Naive thymus-derived CD4-positive, alpha-beta T cell (primary cell): ENCODE measurements at regions of chr12 and their contacts with region 1.

Region 1: GRCh38 chr12:49623142-49623904 is at the start of gene PRPF40B:
- DNase-seq: peak; percentile 82 to 92 (median 89)
- ATAC-seq: peak; percentile 89
- H3K4me3 ChIP-seq: peak within 1 kb of the TSS; percentile 42
- H3K4me3 Mint-ChIP-seq: peak within 1 kb of the TSS; percentile 86 to 96 (median 91)
- H3K27ac ChIP-seq: peak within 1 kb of the TSS; percentile 66
- H3K27ac Mint-ChIP-seq: peak within 1 kb of the TSS; percentile 81 to 95 (median 91)
- H3K4me1 ChIP-seq: peaks cover 6 to 22% of the 10 kb centered on the region in 2 donors
- H3K4me1 Mint-ChIP-seq: peaks cover 19 to 29% (median 23%) of the 10 kb centered on the region in 7 donors
- H3K27me3 ChIP-seq: no peaks in the 10 kb centered on the region
- H3K27me3 Mint-ChIP-seq: peaks cover 0 to 32% (median 0%) of the 10 kb centered on the region in 5 donors
- total RNA-seq, gene PRPF40B: 7.8 to 24.1 (median 12.1) TPM

Region 2: GRCh38 chr12:49322708-49323523 is 300.4 kb before region 1 on chr12 and contains the start of gene TROAP:
- CTCF ChIA-PET with region 1: no interaction called
- POLR2A ChIA-PET with region 1: no interaction called
- intact Hi-C with region 1: loop called in 1 of 2 experiments (anchors 1 kb)
- DNase-seq: peak; percentile 89 to 98 (median 96)
- ATAC-seq: peak; percentile 97
- H3K4me3 ChIP-seq: peak within 1 kb of the TSS; percentile 75
- H3K4me3 Mint-ChIP-seq: peak within 1 kb of the TSS; percentile 86 to 98 (median 92)
- H3K27ac ChIP-seq: peak within 1 kb of the TSS; percentile 72
- H3K27ac Mint-ChIP-seq: peak within 1 kb of the TSS; percentile 29 to 95 (median 83)
- H3K4me1 ChIP-seq: peaks cover 5 to 14% of the 10 kb centered on the region in 2 donors
- H3K4me1 Mint-ChIP-seq: peaks cover 16 to 25% (median 19%) of the 10 kb centered on the region in 7 donors
- H3K27me3 ChIP-seq: no peaks in the 10 kb centered on the region
- H3K27me3 Mint-ChIP-seq: peaks cover 0 to 5% (median 0%) of the 10 kb centered on the region in 5 donors
- total RNA-seq, gene TROAP: 0.83 to 58.2 (median 1.3) TPM in 4 of 5 experiments, not detected in the other

Region 3: DNA sequence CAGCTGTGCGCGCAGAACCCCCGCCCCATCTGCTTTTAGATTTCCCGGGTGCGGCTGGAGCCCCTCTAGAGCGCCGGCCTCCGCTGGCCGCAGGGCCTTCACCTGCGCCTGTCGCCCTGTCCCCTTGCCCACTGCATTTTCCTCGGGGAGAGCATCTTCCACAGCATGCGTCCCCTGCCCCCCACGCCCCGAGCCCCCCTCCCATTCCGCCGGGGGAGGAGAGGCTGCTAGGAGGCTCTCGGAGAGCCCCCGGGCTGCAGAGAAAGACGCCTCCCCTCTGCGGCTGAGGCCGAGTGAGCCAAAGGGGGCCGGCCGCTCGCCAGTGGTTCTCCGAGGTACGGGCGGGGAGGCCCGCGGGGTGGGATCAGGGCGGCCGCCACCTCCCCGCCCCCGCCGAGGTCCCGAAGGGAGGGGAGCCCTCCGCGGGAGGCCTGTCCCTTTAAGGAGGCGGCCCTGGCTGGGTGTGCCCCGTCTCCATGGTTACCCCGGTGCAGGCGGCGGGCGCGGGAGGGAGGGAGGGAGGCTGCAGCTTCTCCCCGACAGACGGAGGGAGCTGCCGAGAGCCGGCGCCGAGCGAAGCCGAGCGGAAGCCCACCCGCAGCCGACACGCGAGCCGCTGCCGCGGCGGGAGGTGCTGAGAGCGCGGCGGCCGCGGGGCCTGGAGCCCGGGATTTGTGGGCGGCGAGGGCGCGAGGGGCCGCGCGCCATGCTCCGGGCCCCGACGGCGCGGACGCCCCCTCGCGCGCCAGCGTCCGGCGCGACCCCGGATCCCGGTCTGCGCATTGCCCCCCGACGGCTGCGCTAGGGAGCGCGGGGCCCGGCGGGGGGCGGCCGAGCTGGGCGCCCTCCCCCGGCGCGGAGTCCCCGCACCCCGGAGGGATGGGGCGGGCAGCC is 84.6 kb before region 1 on chr12 and contains the start of gene KCNH3:
- CTCF ChIA-PET with region 1: interaction called, 4 read pairs
- POLR2A ChIA-PET with region 1: interaction called, 5 read pairs
- intact Hi-C with region 1: loop called (anchors 2 to 5 kb)
- DNase-seq: peak; percentile 66 to 95 (median 86)
- ATAC-seq: peak; percentile 94
- H3K4me3 ChIP-seq: peak within 1 kb of the TSS; percentile 69
- H3K4me3 Mint-ChIP-seq: peak within 1 kb of the TSS; percentile 66 to 87 (median 80)
- H3K27ac ChIP-seq: peak within 1 kb of the TSS; percentile 11
- H3K27ac Mint-ChIP-seq: peak within 1 kb of the TSS in 6 of 9 donors; percentile 43 to 81 (median 64)
- H3K4me1 ChIP-seq: peaks cover 14 to 15% of the 10 kb centered on the region in 2 donors
- H3K4me1 Mint-ChIP-seq: peaks cover 13 to 37% (median 27%) of the 10 kb centered on the region in 7 donors
- H3K27me3 ChIP-seq: no peaks in the 10 kb centered on the region
- H3K27me3 Mint-ChIP-seq: peaks cover 0 to 66% (median 6%) of the 10 kb centered on the region in 5 donors
- total RNA-seq, gene KCNH3: 0.99 to 5.3 (median 3.8) TPM

Region 4: DNA sequence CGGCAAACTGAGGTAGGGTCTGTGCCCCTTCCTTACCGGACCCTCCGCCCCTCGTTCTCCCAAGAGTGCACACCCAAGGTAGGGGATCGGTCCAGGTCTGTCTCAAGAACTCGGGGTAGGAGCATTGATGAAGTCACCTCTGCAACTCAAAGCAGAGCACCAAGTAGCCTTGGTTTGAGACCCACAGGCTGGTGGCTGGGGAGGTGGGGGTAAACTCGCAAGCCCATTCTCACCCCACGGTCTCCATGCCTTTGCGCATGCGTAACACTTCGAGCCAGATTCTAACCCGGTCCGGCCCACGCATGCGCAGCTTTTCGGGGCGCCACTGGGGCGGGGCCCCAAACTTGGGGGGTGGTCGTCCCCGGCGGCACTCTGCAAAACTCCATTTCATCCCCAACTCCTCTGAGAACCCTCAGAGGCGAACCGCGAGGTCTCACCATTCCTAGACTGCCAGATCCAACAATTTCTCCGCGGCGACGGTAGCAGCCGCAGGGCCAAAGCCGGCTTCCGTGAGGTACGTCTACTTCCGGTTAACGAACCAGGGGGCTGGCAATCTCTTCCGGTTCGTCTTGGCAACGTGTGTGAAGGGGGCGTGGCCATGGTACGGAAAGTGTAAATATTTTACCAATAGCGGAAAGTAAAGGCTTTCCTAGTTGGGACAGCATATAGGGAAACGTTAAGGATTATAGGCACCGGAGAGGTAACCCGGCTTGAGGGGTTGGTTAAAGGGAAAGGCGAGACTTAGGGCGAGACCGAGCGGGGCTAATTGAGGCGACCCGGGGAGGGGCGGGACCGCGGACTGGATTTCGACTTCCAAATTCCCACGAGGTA is 55.5 kb before region 1 on chr12 and contains the start of gene MCRS1:
- CTCF ChIA-PET with region 1: interaction called, 3 read pairs
- POLR2A ChIA-PET with region 1: interaction called, 6 read pairs
- intact Hi-C with region 1: loop called (anchors 1 to 2 kb)
- DNase-seq: peak; percentile 89 to 94 (median 91)
- ATAC-seq: peak; percentile 92
- H3K4me3 ChIP-seq: peak within 1 kb of the TSS; percentile 81
- H3K4me3 Mint-ChIP-seq: peak within 1 kb of the TSS; percentile 94 to 100 (median 99)
- H3K27ac ChIP-seq: peak within 1 kb of the TSS; percentile 91
- H3K27ac Mint-ChIP-seq: peak within 1 kb of the TSS; percentile 98 to 100 (median 99)
- H3K4me1 ChIP-seq: peaks cover 33 to 42% of the 10 kb centered on the region in 2 donors
- H3K4me1 Mint-ChIP-seq: peaks cover 45 to 76% (median 61%) of the 10 kb centered on the region in 7 donors
- H3K27me3 ChIP-seq: no peaks in the 10 kb centered on the region
- H3K27me3 Mint-ChIP-seq: peaks cover 0 to 3% (median 0%) of the 10 kb centered on the region in 5 donors
- total RNA-seq, gene MCRS1: 70.0 to 85.2 (median 71.4) TPM

Region 5: DNA sequence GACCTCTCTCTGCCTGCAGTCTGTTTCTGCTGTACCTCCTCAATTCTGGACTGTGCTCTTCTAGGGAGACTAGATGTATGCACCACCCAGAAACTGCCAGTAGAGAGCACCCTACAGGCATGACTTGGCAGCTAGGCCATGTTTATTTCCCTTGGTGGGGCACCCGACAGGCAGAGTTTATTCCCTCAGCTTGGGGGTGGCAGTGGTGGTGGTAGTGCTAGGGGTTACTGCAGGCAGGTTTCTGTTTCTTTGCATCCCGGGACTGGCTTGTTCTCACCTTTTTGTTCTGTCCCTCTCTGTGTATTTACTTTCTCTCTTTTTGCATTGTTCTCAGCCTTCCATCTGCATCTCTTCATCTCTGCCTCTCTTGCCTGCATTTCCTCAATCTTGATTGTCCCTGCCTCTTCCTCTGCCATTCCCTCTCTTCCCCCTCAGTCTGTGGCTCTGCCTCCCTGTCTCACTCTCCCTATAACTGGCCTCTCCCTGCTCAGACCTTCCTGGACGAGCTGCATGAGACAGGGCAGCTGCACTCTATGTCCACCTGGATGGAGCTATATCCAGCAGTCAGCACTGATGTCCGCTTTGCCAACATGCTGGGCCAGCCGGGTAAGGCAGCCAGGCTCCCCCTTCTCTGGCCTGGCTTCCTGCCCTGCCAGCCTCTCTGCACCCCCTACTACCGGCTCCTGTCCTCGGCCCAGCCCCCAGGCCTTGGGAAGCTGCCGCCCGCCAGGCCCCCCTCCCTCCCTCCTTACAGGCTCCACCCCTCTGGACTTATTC is 13.8 kb after region 1 on chr12:
- CTCF ChIA-PET with region 1: interaction called, 29 read pairs
- POLR2A ChIA-PET with region 1: interaction called, 9 read pairs
- intact Hi-C with region 1: no loop called
- DNase-seq: peak in 8 of 9 donors; percentile 45 to 71 (median 61)
- ATAC-seq: peak; percentile 95
- H3K4me3 ChIP-seq: no peak overlapping the region
- H3K4me3 Mint-ChIP-seq: peak overlapping the region in 1 of 10 donors; percentile 20
- H3K27ac ChIP-seq: peak overlapping the region; percentile 38
- H3K27ac Mint-ChIP-seq: peak overlapping the region; percentile 13 to 90 (median 68)
- H3K4me1 ChIP-seq: peaks cover 6 to 11% of the 10 kb centered on the region in 2 donors
- H3K4me1 Mint-ChIP-seq: peaks cover 10 to 36% (median 26%) of the 10 kb centered on the region in 7 donors
- H3K27me3 ChIP-seq: no peaks in the 10 kb centered on the region
- H3K27me3 Mint-ChIP-seq: no peaks in the 10 kb centered on the region

Region 6: GRCh38 chr12:49687941-49688340 is 64.6 kb after region 1 on chr12:
- CTCF ChIA-PET with region 1: no interaction called
- POLR2A ChIA-PET with region 1: no interaction called
- intact Hi-C with region 1: no loop called
- DNase-seq: no peak
- ATAC-seq: no peak
- H3K4me3 ChIP-seq: no peak overlapping the region
- H3K4me3 Mint-ChIP-seq: no peak overlapping the region
- H3K27ac ChIP-seq: no peak overlapping the region
- H3K27ac Mint-ChIP-seq: peak overlapping the region in 5 of 9 donors; percentile 14 to 62 (median 28)
- H3K4me1 ChIP-seq: peaks cover 0 to 3% of the 10 kb centered on the region in 2 donors
- H3K4me1 Mint-ChIP-seq: peaks cover 42 to 80% (median 66%) of the 10 kb centered on the region in 7 donors
- H3K27me3 ChIP-seq: no peaks in the 10 kb centered on the region
- H3K27me3 Mint-ChIP-seq: no peaks in the 10 kb centered on the region

Region 7: GRCh38 chr12:49813131-49813530 is 189.8 kb after region 1 on chr12:
- CTCF ChIA-PET with region 1: no interaction called
- POLR2A ChIA-PET with region 1: no interaction called
- intact Hi-C with region 1: no loop called
- DNase-seq: no peak
- ATAC-seq: no peak
- H3K4me3 ChIP-seq: no peak overlapping the region
- H3K4me3 Mint-ChIP-seq: no peak overlapping the region
- H3K27ac ChIP-seq: no peak overlapping the region
- H3K27ac Mint-ChIP-seq: no peak overlapping the region
- H3K4me1 ChIP-seq: no peaks in the 10 kb centered on the region
- H3K4me1 Mint-ChIP-seq: peaks cover 3 to 11% (median 6%) of the 10 kb centered on the region in 7 donors
- H3K27me3 ChIP-seq: no peaks in the 10 kb centered on the region
- H3K27me3 Mint-ChIP-seq: no peaks in the 10 kb centered on the region

Region 8: GRCh38 chr12:49828133-49829091 is 205.1 kb after region 1 on chr12 and contains the start of gene NCKAP5L:
- CTCF ChIA-PET with region 1: no interaction called
- POLR2A ChIA-PET with region 1: no interaction called
- intact Hi-C with region 1: loop called (anchors 1 kb)
- DNase-seq: peak; percentile 86 to 94 (median 93)
- ATAC-seq: peak; percentile 96
- H3K4me3 ChIP-seq: peak within 1 kb of the TSS; percentile 82
- H3K4me3 Mint-ChIP-seq: peak within 1 kb of the TSS; percentile 88 to 99 (median 96)
- H3K27ac ChIP-seq: peak within 1 kb of the TSS; percentile 79
- H3K27ac Mint-ChIP-seq: peak within 1 kb of the TSS; percentile 89 to 99 (median 95)
- H3K4me1 ChIP-seq: peaks cover 8 to 16% of the 10 kb centered on the region in 2 donors
- H3K4me1 Mint-ChIP-seq: peaks cover 7 to 42% (median 30%) of the 10 kb centered on the region in 7 donors
- H3K27me3 ChIP-seq: no peaks in the 10 kb centered on the region
- H3K27me3 Mint-ChIP-seq: peaks cover 0 to 13% (median 0%) of the 10 kb centered on the region in 5 donors
- total RNA-seq, gene NCKAP5L: 4.3 to 27.5 (median 12.0) TPM

Region 9: DNA sequence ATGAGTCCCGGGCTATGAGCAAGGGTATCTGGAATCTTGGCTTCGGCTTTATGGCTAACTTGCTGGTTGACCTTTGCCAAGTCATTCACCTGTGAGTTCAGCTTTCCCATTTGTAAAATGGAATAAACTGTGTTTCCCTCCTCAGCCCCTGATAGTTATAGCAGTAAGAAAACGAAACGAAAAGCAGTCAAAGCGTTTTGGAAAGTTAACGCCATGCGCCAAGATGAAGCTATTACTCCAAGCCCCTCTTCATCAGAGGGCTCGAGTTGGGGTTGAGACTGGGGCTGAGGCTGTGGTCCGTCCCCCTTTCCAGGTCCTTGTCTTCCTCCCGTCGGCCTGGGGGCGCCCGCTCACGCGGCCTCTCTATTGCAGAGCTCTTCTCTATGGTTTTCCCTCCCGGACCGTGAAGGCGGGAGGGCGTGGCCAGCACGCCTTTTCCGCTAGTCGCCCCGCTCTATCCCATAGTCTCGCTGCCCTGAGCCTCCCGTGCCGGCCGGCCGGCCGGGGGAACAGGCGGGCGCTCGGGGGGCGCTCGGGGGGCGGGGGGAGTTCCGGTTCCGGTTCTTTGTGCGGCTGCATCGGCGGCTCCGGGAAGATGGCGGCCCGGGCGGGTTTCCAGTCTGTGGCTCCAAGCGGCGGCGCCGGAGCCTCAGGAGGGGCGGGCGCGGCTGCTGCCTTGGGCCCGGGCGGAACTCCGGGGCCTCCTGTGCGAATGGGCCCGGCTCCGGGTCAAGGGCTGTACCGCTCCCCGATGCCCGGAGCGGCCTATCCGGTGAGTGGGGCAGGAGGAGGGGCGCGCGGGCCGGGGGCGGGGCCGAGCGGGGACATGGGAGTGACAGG is 461.7 kb after region 1 on chr12 and contains the start of gene SMARCD1:
- CTCF ChIA-PET with region 1: no interaction called
- POLR2A ChIA-PET with region 1: no interaction called
- intact Hi-C with region 1: loop called in 1 of 2 experiments (anchors 10 kb)
- DNase-seq: peak; percentile 65 to 85 (median 76)
- ATAC-seq: peak; percentile 92
- H3K4me3 ChIP-seq: peak within 1 kb of the TSS; percentile 82
- H3K4me3 Mint-ChIP-seq: peak within 1 kb of the TSS; percentile 87 to 98 (median 94)
- H3K27ac ChIP-seq: peak within 1 kb of the TSS; percentile 98
- H3K27ac Mint-ChIP-seq: peak within 1 kb of the TSS; percentile 93 to 99 (median 96)
- H3K4me1 ChIP-seq: peaks cover 0 to 5% of the 10 kb centered on the region in 2 donors
- H3K4me1 Mint-ChIP-seq: peaks cover 6 to 46% (median 40%) of the 10 kb centered on the region in 7 donors
- H3K27me3 ChIP-seq: no peaks in the 10 kb centered on the region
- H3K27me3 Mint-ChIP-seq: no peaks in the 10 kb centered on the region
- total RNA-seq, gene SMARCD1: 65.1 to 88.5 (median 67.5) TPM